ENCODE measurements at regions of chr7 and their contacts with region 1.

Region 1: GRCh38 chr7:87219545-87220025 is at the start of gene TMEM243:
- DNase-seq: peak; percentile 84 to 92 (median 87)
- H3K4me3 ChIP-seq: peak within 1 kb of the TSS; percentile 83 to 99
- H3K4me3 Mint-ChIP-seq: peak within 1 kb of the TSS; percentile 97 to 100 (median 99)
- H3K27ac ChIP-seq: peak within 1 kb of the TSS; percentile 92
- H3K27ac Mint-ChIP-seq: peak within 1 kb of the TSS; percentile 98 to 100 (median 99)
- H3K4me1 ChIP-seq: peaks cover 45% of the 10 kb centered on the region
- H3K4me1 Mint-ChIP-seq: peaks cover 26 to 62% (median 37%) of the 10 kb centered on the region in 4 donors
- H3K27me3 ChIP-seq: no peaks in the 10 kb centered on the region
- H3K27me3 Mint-ChIP-seq: peaks cover 0 to 1% of the 10 kb centered on the region in 2 donors
- total RNA-seq, gene TMEM243: 103 to 105 TPM

Region 2: GRCh38 chr7:86748843-86749719 is 470.5 kb before region 1 on chr7:
- CTCF ChIA-PET with region 1: no interaction called
- POLR2A ChIA-PET with region 1: no interaction called
- intact Hi-C with region 1: no loop called
- DNase-seq: no peak
- H3K4me3 ChIP-seq: no peak overlapping the region
- H3K4me3 Mint-ChIP-seq: no peak overlapping the region
- H3K27ac ChIP-seq: no peak overlapping the region
- H3K27ac Mint-ChIP-seq: no peak overlapping the region
- H3K4me1 ChIP-seq: no peaks in the 10 kb centered on the region
- H3K4me1 Mint-ChIP-seq: no peaks in the 10 kb centered on the region
- H3K27me3 ChIP-seq: no peaks in the 10 kb centered on the region
- H3K27me3 Mint-ChIP-seq: no peaks in the 10 kb centered on the region

Region 3: DNA sequence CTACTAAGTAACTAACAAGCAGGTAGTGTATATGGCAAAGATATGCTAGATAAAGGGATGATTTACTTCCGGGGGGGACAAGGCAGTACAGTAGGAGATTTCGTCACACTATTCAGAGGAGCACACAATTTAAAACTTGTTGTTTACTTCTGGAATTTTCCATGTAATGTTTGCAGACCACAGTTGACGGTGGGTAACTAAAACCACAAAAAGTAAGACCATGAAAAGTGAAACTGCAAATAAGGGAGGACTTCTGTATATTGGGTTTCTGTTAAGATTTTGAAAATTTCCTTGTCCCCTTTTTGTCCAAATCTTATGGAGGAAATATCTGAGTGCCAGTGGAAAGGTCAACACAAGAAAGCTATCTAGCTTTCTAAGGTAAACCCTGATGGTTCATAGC is 330.1 kb before region 1 on chr7:
- CTCF ChIA-PET with region 1: no interaction called
- POLR2A ChIA-PET with region 1: no interaction called
- intact Hi-C with region 1: no loop called
- DNase-seq: no peak
- H3K4me3 ChIP-seq: no peak overlapping the region
- H3K4me3 Mint-ChIP-seq: no peak overlapping the region
- H3K27ac ChIP-seq: no peak overlapping the region
- H3K27ac Mint-ChIP-seq: no peak overlapping the region
- H3K4me1 ChIP-seq: no peaks in the 10 kb centered on the region
- H3K4me1 Mint-ChIP-seq: no peaks in the 10 kb centered on the region
- H3K27me3 ChIP-seq: no peaks in the 10 kb centered on the region
- H3K27me3 Mint-ChIP-seq: no peaks in the 10 kb centered on the region

Region 4: GRCh38 chr7:87152107-87152844 is 67.3 kb before region 1 on chr7 and contains the start of gene DMTF1:
- CTCF ChIA-PET with region 1: interaction called, 10 read pairs
- POLR2A ChIA-PET with region 1: interaction called, 189 read pairs
- intact Hi-C with region 1: loop called (anchors 1 kb)
- DNase-seq: peak; percentile 83 to 89 (median 85)
- H3K4me3 ChIP-seq: peak within 1 kb of the TSS; percentile 82 to 99
- H3K4me3 Mint-ChIP-seq: peak within 1 kb of the TSS; percentile 94 to 99 (median 96)
- H3K27ac ChIP-seq: peak within 1 kb of the TSS; percentile 82
- H3K27ac Mint-ChIP-seq: peak within 1 kb of the TSS; percentile 95 to 100 (median 97)
- H3K4me1 ChIP-seq: peaks cover 47% of the 10 kb centered on the region
- H3K4me1 Mint-ChIP-seq: peaks cover 31 to 51% (median 43%) of the 10 kb centered on the region in 4 donors
- H3K27me3 ChIP-seq: no peaks in the 10 kb centered on the region
- H3K27me3 Mint-ChIP-seq: no peaks in the 10 kb centered on the region
- total RNA-seq, gene DMTF1: 173 to 183 TPM

Region 5: DNA sequence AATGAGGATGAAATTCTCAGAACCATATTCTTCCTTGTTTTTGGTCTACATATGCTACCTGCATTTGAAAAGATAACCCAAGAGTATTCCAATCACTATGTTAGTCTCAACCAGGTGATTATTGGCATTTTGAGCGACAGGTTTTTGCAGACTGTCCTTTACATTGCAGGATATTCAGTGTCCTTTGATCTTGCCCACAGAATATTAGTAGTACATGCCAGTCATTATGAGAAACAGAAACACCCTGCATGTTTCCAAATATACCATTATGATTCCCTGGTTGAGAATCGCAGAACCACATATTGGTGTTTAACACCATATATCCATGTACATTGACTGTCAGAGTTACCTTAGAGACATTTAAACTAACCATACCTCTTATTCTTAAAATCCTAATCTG is 30.7 kb before region 1 on chr7:
- CTCF ChIA-PET with region 1: interaction called, 13 read pairs
- POLR2A ChIA-PET with region 1: interaction called, 60 read pairs
- intact Hi-C with region 1: no loop called
- DNase-seq: no peak
- H3K4me3 ChIP-seq: no peak overlapping the region
- H3K4me3 Mint-ChIP-seq: no peak overlapping the region
- H3K27ac ChIP-seq: no peak overlapping the region
- H3K27ac Mint-ChIP-seq: peak overlapping the region in 3 of 7 donors; percentile 11 to 62 (median 49)
- H3K4me1 ChIP-seq: peaks cover 10% of the 10 kb centered on the region
- H3K4me1 Mint-ChIP-seq: peaks cover 21 to 35% (median 29%) of the 10 kb centered on the region in 4 donors
- H3K27me3 ChIP-seq: no peaks in the 10 kb centered on the region
- H3K27me3 Mint-ChIP-seq: no peaks in the 10 kb centered on the region

Region 6: GRCh38 chr7:87231256-87231655 is 11.7 kb after region 1 on chr7:
- CTCF ChIA-PET with region 1: interaction called, 12 read pairs
- POLR2A ChIA-PET with region 1: interaction called, 3 read pairs
- intact Hi-C with region 1: loop called (anchors 2 kb)
- DNase-seq: no peak
- H3K4me3 ChIP-seq: no peak overlapping the region
- H3K4me3 Mint-ChIP-seq: no peak overlapping the region
- H3K27ac ChIP-seq: no peak overlapping the region
- H3K27ac Mint-ChIP-seq: no peak overlapping the region
- H3K4me1 ChIP-seq: no peaks in the 10 kb centered on the region
- H3K4me1 Mint-ChIP-seq: no peaks in the 10 kb centered on the region
- H3K27me3 ChIP-seq: no peaks in the 10 kb centered on the region
- H3K27me3 Mint-ChIP-seq: peaks cover 2% of the 10 kb centered on the region in 2 donors

Region 7: GRCh38 chr7:87933945-87934698 is 714.5 kb after region 1 on chr7 and contains the start of gene ADAM22:
- CTCF ChIA-PET with region 1: no interaction called
- POLR2A ChIA-PET with region 1: no interaction called
- intact Hi-C with region 1: loop called (anchors 1 kb)
- DNase-seq: peak; percentile 80 to 84 (median 81)
- H3K4me3 ChIP-seq: peak within 1 kb of the TSS; percentile 52 to 64
- H3K4me3 Mint-ChIP-seq: peak within 1 kb of the TSS; percentile 88 to 93 (median 92)
- H3K27ac ChIP-seq: peak within 1 kb of the TSS; percentile 15
- H3K27ac Mint-ChIP-seq: peak within 1 kb of the TSS; percentile 55 to 85 (median 74)
- H3K4me1 ChIP-seq: peaks cover 13% of the 10 kb centered on the region
- H3K4me1 Mint-ChIP-seq: peaks cover 10 to 20% (median 12%) of the 10 kb centered on the region in 4 donors
- H3K27me3 ChIP-seq: no peaks in the 10 kb centered on the region
- H3K27me3 Mint-ChIP-seq: no peaks in the 10 kb centered on the region
- total RNA-seq, gene ADAM22: 5.2 to 7.7 TPM

Measured in CD4-positive, alpha-beta memory T cell (primary cell).